ENCODE measurements at regions of chrX and their contacts with region 1.

Region 1: GRCh38 chrX:57821703-57822375 is 88.4 kb downstream of the ZXDA start:
- DNase-seq: peak; percentile 13
- ATAC-seq: peak; percentile 90
- H3K4me3 ChIP-seq: no peak overlapping the region
- H3K27ac ChIP-seq: no peak overlapping the region
- H3K4me1 ChIP-seq: no peaks in the 10 kb centered on the region
- H3K27me3 ChIP-seq: no peaks in the 10 kb centered on the region
- CTCF ChIP-seq: peak; percentile 54 to 77 (median 64); a peak in 5 of 6 replicates
- EP300 ChIP-seq: no peak
- POLR2A ChIP-seq: no peak
- RAD21 ChIP-seq: peak; percentile 92

Region 2: GRCh38 chrX:57453901-57454300 is 367.9 kb before region 1 on chrX:
- CTCF ChIA-PET with region 1: no interaction called
- POLR2A ChIA-PET with region 1: no interaction called
- RAD21 ChIA-PET with region 1: no interaction called
- SMC1A ChIA-PET with region 1: no interaction called
- in situ Hi-C with region 1: no loop called
- intact Hi-C with region 1: no loop called
- DNase-seq: peak; percentile 0
- ATAC-seq: peak; percentile 90
- H3K4me3 ChIP-seq: no peak overlapping the region
- H3K27ac ChIP-seq: no peak overlapping the region
- H3K4me1 ChIP-seq: no peaks in the 10 kb centered on the region
- H3K27me3 ChIP-seq: no peaks in the 10 kb centered on the region
- CTCF ChIP-seq: peak; percentile 65 to 71 (median 68)
- EP300 ChIP-seq: no peak
- POLR2A ChIP-seq: no peak
- RAD21 ChIP-seq: peak; percentile 70

Region 3: DNA sequence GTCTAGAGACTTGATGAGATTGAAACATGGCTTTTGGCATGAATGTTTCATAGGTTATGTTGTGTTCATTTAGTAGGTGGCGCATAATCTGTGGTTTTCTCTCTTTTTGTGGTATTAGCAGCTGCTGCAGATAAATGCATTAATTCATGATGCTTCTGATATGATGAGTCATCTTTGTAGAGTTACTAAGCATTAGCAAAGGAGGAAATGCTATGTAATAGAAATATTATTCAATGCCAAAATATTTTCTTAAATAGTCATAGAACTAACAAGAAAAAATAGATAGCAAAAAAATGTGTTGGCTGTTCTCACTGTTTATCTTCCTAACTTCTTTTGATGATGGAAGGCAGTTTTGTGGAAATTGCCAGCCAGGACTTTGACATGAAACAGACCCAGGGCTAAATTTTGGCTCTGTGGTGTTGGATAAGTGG is 226.4 kb before region 1 on chrX:
- CTCF ChIA-PET with region 1: no interaction called
- POLR2A ChIA-PET with region 1: no interaction called
- RAD21 ChIA-PET with region 1: no interaction called
- SMC1A ChIA-PET with region 1: no interaction called
- in situ Hi-C with region 1: no loop called
- intact Hi-C with region 1: loop called (anchors 10 kb)
- DNase-seq: no peak
- ATAC-seq: peak; percentile 4; the same call in 1 of the 3 replicates
- H3K4me3 ChIP-seq: peak overlapping the region; percentile 18; the same call in 1 of the 2 replicates
- H3K27ac ChIP-seq: no peak overlapping the region
- H3K4me1 ChIP-seq: no peaks in the 10 kb centered on the region
- H3K27me3 ChIP-seq: no peaks in the 10 kb centered on the region
- CTCF ChIP-seq: no peak
- EP300 ChIP-seq: no peak
- POLR2A ChIP-seq: no peak
- RAD21 ChIP-seq: no peak

Region 4: GRCh38 chrX:57752866-57753265 is 69.0 kb before region 1 on chrX:
- CTCF ChIA-PET with region 1: no interaction called
- POLR2A ChIA-PET with region 1: no interaction called
- RAD21 ChIA-PET with region 1: no interaction called
- SMC1A ChIA-PET with region 1: no interaction called
- in situ Hi-C with region 1: no loop called
- intact Hi-C with region 1: no loop called
- DNase-seq: no peak
- ATAC-seq: no peak
- H3K4me3 ChIP-seq: no peak overlapping the region
- H3K27ac ChIP-seq: no peak overlapping the region
- H3K4me1 ChIP-seq: no peaks in the 10 kb centered on the region
- H3K27me3 ChIP-seq: no peaks in the 10 kb centered on the region
- CTCF ChIP-seq: no peak
- EP300 ChIP-seq: no peak
- POLR2A ChIP-seq: no peak
- RAD21 ChIP-seq: no peak

Region 5: GRCh38 chrX:57918750-57919436 is 97.1 kb after region 1 on chrX:
- CTCF ChIA-PET with region 1: interaction called, 18 read pairs
- POLR2A ChIA-PET with region 1: no interaction called
- RAD21 ChIA-PET with region 1: no interaction called
- SMC1A ChIA-PET with region 1: no interaction called
- in situ Hi-C with region 1: no loop called
- intact Hi-C with region 1: loop called (anchors 1 kb)
- DNase-seq: no peak
- ATAC-seq: peak; percentile 66
- H3K4me3 ChIP-seq: no peak overlapping the region
- H3K27ac ChIP-seq: no peak overlapping the region
- H3K4me1 ChIP-seq: no peaks in the 10 kb centered on the region
- H3K27me3 ChIP-seq: no peaks in the 10 kb centered on the region
- CTCF ChIP-seq: peak; percentile 45 to 49 (median 47); a peak in 5 of 6 replicates
- EP300 ChIP-seq: no peak
- POLR2A ChIP-seq: no peak
- RAD21 ChIP-seq: peak; percentile 52

Region 6: DNA sequence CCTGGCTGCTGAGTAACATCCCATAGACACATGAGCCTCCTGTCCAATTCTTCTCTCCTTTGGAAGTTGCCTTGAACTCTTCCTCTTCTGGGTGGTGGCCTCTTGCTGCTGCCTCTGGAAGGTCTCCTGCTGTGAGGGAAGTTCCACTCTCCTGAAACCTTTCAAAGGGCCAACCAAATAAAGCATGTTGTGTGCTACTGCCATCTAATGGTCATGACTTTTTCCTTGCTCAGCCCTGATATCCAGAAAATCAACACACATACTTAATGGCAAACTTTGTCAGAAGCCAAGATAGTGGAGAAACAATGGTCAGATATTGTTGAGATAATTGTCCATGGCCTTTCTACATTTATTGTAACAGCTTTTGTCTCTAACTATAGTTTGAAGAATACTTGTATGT is 107.5 kb after region 1 on chrX:
- CTCF ChIA-PET with region 1: interaction called, 5 read pairs
- POLR2A ChIA-PET with region 1: no interaction called
- RAD21 ChIA-PET with region 1: interaction called, 3 read pairs
- SMC1A ChIA-PET with region 1: no interaction called
- in situ Hi-C with region 1: no loop called
- intact Hi-C with region 1: loop called (anchors 1 kb)
- DNase-seq: no peak
- ATAC-seq: peak; percentile 68
- H3K4me3 ChIP-seq: no peak overlapping the region
- H3K27ac ChIP-seq: no peak overlapping the region
- H3K4me1 ChIP-seq: no peaks in the 10 kb centered on the region
- H3K27me3 ChIP-seq: no peaks in the 10 kb centered on the region
- CTCF ChIP-seq: peak; percentile 46 to 55 (median 53); a peak in 5 of 6 replicates
- EP300 ChIP-seq: no peak
- POLR2A ChIP-seq: no peak
- RAD21 ChIP-seq: peak; percentile 51

Region 7: DNA sequence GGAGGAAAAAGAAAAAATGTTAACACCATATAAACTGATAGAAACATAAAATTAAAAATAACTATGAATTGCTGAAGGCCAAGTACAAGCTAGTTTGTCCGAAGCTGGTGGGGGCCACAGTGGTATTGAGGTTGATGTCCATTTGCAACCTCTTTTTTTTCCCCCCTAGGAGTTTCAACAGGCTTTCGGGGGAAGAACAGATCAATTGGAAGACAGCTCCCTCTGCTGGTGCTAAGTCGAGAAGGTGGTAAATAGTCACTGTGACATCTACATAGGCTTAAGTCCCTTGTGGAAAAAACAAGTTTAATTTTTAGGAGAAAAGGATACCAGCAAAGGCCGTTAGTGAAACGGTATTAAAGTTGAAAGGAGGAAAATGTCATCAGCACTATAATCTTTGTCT is 204.1 kb after region 1 on chrX:
- CTCF ChIA-PET with region 1: interaction called, 11 read pairs
- POLR2A ChIA-PET with region 1: no interaction called
- RAD21 ChIA-PET with region 1: interaction called, 3 read pairs
- SMC1A ChIA-PET with region 1: interaction called, 13 read pairs
- in situ Hi-C with region 1: loop called (anchors 10 kb)
- intact Hi-C with region 1: loop called (anchors 2 kb)
- DNase-seq: no peak
- ATAC-seq: peak; percentile 69
- H3K4me3 ChIP-seq: no peak overlapping the region
- H3K27ac ChIP-seq: no peak overlapping the region
- H3K4me1 ChIP-seq: no peaks in the 10 kb centered on the region
- H3K27me3 ChIP-seq: no peaks in the 10 kb centered on the region
- CTCF ChIP-seq: peak; percentile 57 to 65 (median 61)
- EP300 ChIP-seq: no peak
- POLR2A ChIP-seq: no peak
- RAD21 ChIP-seq: peak; percentile 61